AG04450 (cell line): ENCODE measurements at regions of chr2 and their contacts with region 1.

Region 1: DNA sequence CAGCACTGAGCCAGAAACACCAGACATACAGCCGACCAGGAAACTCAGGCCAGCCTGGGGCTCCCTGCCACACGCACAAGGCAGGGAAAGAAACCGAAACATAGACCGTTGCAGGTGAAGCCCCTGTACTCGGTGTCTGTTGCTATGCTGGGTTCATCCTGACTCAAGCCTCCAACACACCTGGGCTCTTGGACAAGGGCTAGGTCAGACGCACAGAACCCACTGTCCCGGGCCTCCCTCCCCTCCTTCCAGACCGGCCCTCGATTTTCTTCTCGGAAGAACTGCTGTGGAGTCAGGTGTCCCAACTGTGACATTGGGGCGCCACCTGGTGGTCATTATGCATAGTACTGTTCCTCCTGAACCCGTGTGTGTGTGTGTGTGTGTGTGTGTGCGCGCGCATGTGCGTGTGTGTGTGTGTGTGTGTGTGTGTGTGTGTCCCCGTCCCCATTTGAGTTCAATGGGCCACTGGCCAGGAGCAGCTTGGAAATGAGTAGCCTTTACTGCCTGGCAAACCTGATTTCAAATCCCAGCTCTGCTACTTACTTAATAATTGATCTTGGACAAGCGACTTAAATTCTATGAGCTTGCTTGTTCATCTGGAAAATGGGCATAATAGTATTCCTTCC is 55.4 kb upstream of the GLI2 start:
- DNase-seq: peak; percentile 70
- H3K4me3 ChIP-seq: no peak overlapping the region
- H3K27ac ChIP-seq: no peak overlapping the region
- H3K27me3 ChIP-seq: peaks cover 29% of the 10 kb centered on the region
- CTCF ChIP-seq: peak; percentile 74

Region 2: GRCh38 chr2:120338011-120338410 is 342.2 kb before region 1 on chr2:
- CTCF ChIA-PET with region 1: interaction called, 62 read pairs
- POLR2A ChIA-PET with region 1: no interaction called
- DNase-seq: no peak
- H3K4me3 ChIP-seq: no peak overlapping the region
- H3K27ac ChIP-seq: no peak overlapping the region
- H3K27me3 ChIP-seq: peaks cover 47% of the 10 kb centered on the region
- CTCF ChIP-seq: no peak

Region 3: DNA sequence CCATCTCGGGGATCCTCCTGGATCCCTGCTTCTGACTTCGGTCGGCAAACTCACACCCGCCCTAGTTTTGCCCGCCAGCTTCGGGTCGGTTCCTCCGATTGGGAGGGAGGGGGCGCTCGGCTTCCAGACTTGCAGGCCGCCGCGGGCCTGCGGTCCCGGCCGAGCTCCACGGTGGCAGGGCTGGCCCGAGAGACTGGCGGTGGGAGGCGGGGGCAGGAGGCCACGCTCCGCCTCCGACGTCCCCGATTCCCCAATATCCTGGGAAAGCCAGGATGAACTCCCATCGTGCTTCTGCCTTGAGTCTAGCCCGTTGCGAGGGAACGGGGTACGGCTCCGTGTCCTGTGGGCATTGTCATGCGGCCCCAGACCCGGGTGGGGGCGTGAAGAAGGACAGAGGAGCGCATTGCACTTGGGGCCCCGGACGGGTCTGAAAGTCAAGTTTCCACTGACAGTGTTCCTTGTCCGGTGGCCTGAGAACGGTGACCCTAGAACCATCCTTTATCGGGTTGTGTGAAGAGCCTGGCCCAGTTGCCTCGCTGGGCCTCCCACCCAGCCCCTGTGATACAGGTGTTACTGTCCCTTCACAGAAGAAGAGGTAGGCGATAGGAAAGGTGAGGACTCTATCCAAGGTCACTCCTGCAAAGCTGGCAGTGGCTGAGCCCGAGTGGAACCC is 336.7 kb before region 1 on chr2:
- CTCF ChIA-PET with region 1: interaction called, 62 read pairs
- POLR2A ChIA-PET with region 1: no interaction called
- DNase-seq: peak; percentile 26
- H3K4me3 ChIP-seq: no peak overlapping the region
- H3K27ac ChIP-seq: no peak overlapping the region
- H3K27me3 ChIP-seq: peaks cover 72% of the 10 kb centered on the region
- CTCF ChIP-seq: peak; percentile 79